Natural killer cell (primary cell): ENCODE measurements at regions of chr16 and their contacts with region 1.

Region 1: DNA sequence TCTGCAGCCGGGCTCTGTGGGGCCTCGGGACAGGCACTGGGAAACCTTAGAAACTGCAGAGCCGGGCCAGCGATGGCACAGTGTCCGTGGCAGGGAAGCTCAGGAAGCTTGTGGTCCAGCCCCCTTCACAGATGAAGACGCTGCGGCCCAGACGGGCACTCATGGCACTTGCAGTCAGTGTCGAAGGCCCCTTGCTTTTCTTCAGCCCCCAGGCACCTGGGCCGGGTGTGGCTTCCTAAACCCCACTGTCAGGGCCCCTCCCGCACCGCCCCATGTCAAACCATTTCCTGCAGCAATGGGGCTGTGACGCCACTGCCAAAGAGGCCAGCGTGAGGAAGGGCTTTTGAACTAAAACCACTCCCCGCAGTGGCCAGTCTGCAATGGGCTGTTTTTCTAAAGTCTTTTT is 164.0 kb downstream of the LAT start:
- DNase-seq: peak; percentile 70 to 92
- ATAC-seq: peak; percentile 85 to 92 (median 91)
- H3K4me3 ChIP-seq: no peak overlapping the region
- H3K4me3 Mint-ChIP-seq: peak overlapping the region; percentile 84
- H3K27ac ChIP-seq: peak overlapping the region; percentile 54
- H3K27ac Mint-ChIP-seq: peak overlapping the region; percentile 94 to 96
- H3K4me1 ChIP-seq: peaks cover 66% of the 10 kb centered on the region
- H3K4me1 Mint-ChIP-seq: peaks cover 55 to 82% of the 10 kb centered on the region in 2 donors
- H3K27me3 ChIP-seq: no peaks in the 10 kb centered on the region
- H3K27me3 Mint-ChIP-seq: no peaks in the 10 kb centered on the region
- CTCF ChIP-seq: no peak

Region 2: DNA sequence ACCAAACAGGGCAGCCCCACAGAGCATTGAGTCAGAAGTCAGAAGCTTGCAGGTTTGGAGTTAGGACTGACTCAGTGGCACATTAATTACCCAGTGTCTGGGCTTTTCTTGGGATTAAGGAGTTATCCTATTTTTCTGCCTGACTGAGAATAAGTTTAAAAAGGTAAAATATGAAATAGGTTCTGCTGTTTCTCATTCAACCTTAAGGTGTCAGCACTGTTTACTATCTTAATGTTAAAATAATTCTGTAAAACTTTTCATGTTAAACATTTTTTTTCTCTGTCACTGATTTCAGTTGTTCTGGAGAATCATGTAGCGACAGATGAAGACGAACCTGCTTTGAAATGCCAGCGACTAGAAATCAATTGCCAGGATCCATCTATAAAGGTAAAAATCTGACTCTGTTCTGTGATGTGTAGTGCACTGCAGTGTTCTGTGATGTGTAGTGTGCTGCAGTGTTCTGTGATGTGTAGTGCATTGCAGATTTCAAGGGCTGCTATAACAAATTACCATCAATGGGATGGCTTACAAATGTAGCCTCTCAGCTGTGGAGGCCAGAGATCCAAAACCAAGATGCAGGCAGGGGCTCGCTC is 36.0 kb before region 1 on chr16:
- intact Hi-C with region 1: loop called (anchors 2 kb)
- DNase-seq: no peak
- ATAC-seq: no peak
- H3K4me3 ChIP-seq: no peak overlapping the region
- H3K4me3 Mint-ChIP-seq: peak overlapping the region; percentile 87
- H3K27ac ChIP-seq: peak overlapping the region; percentile 88
- H3K27ac Mint-ChIP-seq: peak overlapping the region; percentile 98
- H3K4me1 ChIP-seq: peaks cover 73% of the 10 kb centered on the region
- H3K4me1 Mint-ChIP-seq: peaks cover 71 to 73% of the 10 kb centered on the region in 2 donors
- H3K27me3 ChIP-seq: no peaks in the 10 kb centered on the region
- H3K27me3 Mint-ChIP-seq: no peaks in the 10 kb centered on the region
- CTCF ChIP-seq: no peak